ENCODE measurements at regions of chr1 and their contacts with region 1.

Region 1: GRCh38 chr1:193537266-193538002 is 351.0 kb upstream of the B3GALT2 start:
- DNase-seq: peak; percentile 61
- H3K4me3 Mint-ChIP-seq: peak overlapping the region; percentile 22
- H3K27ac Mint-ChIP-seq: peak overlapping the region; percentile 78
- H3K4me1 Mint-ChIP-seq: peaks cover 55% of the 10 kb centered on the region
- H3K27me3 Mint-ChIP-seq: no peaks in the 10 kb centered on the region

Region 2: DNA sequence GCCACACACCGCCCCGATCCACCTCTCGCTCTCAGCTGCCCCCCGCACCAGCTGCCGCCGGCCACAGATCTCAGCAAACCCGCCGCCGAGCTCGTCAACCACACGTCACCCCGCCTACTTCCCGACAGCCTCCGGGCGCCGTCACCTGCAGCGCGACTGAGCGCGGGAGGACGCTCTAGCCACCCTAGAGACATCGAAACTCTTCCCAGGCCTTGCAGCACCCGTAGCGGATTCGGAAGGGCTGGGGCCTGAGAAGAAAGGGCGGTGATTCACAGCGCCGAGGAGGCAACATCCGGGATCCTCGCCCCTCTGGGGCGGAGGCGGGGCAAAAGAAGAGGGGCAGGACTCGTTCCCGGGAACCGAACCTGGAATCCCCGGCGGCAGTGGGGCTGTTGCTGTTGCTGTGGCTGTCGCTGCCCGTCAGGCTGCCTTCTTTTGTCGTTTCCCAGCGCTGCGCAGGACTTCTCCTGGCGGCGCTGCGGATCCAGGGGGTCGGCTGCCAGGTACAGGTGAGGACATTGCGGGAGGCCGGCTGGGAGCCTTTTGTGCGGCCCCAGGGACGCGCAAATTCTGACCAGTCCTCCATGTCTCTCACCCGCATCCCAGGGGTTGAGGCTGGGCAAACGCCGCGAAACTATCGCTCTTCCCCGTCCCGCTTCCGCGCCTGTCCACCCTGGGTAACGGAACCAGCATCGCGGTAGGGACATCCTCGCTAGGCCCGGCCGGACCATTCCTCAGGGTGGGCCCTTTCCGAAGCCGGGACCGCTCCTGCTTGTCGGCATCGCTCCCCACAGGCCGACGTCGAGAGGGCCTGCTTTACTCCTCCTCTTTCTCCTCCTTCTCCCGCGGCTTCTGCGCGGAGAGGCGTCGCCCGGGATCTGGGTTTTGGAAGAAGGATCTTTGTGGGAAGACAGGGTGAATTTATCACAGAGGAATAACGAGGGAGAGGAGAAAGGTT is 477.9 kb before region 1 on chr1 and contains the starts of genes RO60 and UCHL5:
- intact Hi-C with region 1: loop called (anchors 10 kb)
- DNase-seq: peak; percentile 95
- H3K4me3 Mint-ChIP-seq: peak within 1 kb of the TSS; percentile 94
- H3K27ac Mint-ChIP-seq: peak within 1 kb of the TSS; percentile 100
- H3K4me1 Mint-ChIP-seq: peaks cover 59% of the 10 kb centered on the region
- H3K27me3 Mint-ChIP-seq: no peaks in the 10 kb centered on the region
- total RNA-seq, gene RO60: 68.7 and 70.0 TPM in 2 replicates
- total RNA-seq, gene UCHL5: 88.1 and 93.1 TPM in 2 replicates

Region 3: GRCh38 chr1:193417945-193418744 is 119.3 kb before region 1 on chr1:
- intact Hi-C with region 1: loop called (anchors 1 kb)
- DNase-seq: no peak
- H3K4me3 Mint-ChIP-seq: peak overlapping the region; percentile 36
- H3K27ac Mint-ChIP-seq: peak overlapping the region; percentile 40
- H3K4me1 Mint-ChIP-seq: peaks cover 56% of the 10 kb centered on the region
- H3K27me3 Mint-ChIP-seq: peaks cover 5% of the 10 kb centered on the region

Region 4: GRCh38 chr1:193558491-193559028 is 21.1 kb after region 1 on chr1:
- intact Hi-C with region 1: loop called (anchors 1 kb)
- DNase-seq: no peak
- H3K4me3 Mint-ChIP-seq: peak overlapping the region; percentile 15
- H3K27ac Mint-ChIP-seq: peak overlapping the region; percentile 73
- H3K4me1 Mint-ChIP-seq: peaks cover 17% of the 10 kb centered on the region
- H3K27me3 Mint-ChIP-seq: peaks cover 4% of the 10 kb centered on the region

Region 5: DNA sequence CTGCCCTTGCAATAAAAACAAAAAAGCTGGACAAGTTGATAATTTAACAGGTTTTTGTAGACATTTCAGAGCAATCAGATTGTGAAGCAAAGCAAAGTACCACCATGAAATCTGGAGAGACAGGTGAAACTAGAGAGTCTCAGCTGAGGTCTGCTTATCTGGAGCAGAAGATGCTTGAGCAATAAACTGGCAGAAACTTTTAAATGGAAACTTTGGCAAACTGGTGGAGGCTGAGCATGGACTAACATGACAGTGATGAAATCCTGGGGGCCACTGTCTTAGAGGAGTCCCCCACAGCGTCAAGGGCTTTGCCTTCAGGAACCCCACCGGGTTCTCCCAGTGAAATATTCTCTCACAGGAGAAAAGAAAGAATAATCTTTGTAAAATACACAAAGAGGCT is 65.3 kb after region 1 on chr1:
- intact Hi-C with region 1: no loop called
- DNase-seq: no peak
- H3K4me3 Mint-ChIP-seq: no peak overlapping the region
- H3K27ac Mint-ChIP-seq: no peak overlapping the region
- H3K4me1 Mint-ChIP-seq: peaks cover 25% of the 10 kb centered on the region
- H3K27me3 Mint-ChIP-seq: no peaks in the 10 kb centered on the region

Region 6: DNA sequence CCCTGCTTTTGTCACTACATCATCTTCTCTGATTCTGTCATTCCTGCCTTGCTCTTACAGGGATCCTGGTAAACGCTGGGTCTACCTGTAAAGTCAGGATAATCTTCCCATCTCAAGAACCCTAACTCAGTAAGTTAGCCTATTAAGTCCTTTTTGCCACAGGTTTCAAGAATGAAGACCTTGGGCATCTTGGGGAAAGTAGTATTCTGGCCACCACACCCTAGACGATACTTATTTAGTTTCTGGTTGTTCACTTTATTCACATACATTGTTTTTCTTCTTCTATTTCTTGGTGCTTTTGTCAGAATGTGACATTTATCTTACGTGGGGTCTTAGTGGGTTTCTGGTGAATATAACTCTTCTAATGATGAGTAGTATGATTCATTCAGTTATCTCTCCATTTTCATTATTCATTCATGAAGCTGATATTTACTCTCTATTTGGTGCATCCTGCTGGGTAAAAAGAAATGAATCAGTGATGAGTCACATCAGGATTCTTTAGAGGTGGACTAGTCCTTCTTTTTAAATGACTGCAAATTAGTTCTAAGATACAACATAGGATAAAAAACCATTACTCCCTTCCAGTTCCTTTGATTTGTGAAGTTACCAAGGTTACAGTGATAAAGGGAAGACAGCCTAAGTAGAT is 163.4 kb after region 1 on chr1:
- intact Hi-C with region 1: loop called (anchors 1 kb)
- DNase-seq: no peak
- H3K4me3 Mint-ChIP-seq: no peak overlapping the region
- H3K27ac Mint-ChIP-seq: peak overlapping the region; percentile 20
- H3K4me1 Mint-ChIP-seq: peaks cover 15% of the 10 kb centered on the region
- H3K27me3 Mint-ChIP-seq: no peaks in the 10 kb centered on the region

Measured in activated T-helper 1 cell treated with anti-CD3 and anti-CD28 coated beads, Interleukin-12 subunit alpha, Interleukin-12 subunit beta, Interleukin-2, Interleukin-4 antibody, amounts not matched to agents 30 ng/mL and 10 ng/mL and 1 ng/mL, durations not matched to agents 14 hours and 24 hours and 36 hours (primary cell).